ENCODE measurements at regions of chr2 and their contacts with region 1.

Region 1: GRCh38 chr2:57497489-57498096 is 549.0 kb upstream of the VRK2 start:
- DNase-seq: peak; percentile 16 to 64
- ATAC-seq: peak; percentile 85 to 86; a peak in 5 of 6 replicates
- H3K4me3 ChIP-seq: no peak overlapping the region
- H3K27ac ChIP-seq: no peak overlapping the region
- H3K4me1 ChIP-seq: no peaks in the 10 kb centered on the region
- CTCF ChIP-seq: peak; percentile 93
- EP300 ChIP-seq: no peak
- POLR2A ChIP-seq: no peak
- RAD21 ChIP-seq: peak; percentile 85 to 91

Region 2: DNA sequence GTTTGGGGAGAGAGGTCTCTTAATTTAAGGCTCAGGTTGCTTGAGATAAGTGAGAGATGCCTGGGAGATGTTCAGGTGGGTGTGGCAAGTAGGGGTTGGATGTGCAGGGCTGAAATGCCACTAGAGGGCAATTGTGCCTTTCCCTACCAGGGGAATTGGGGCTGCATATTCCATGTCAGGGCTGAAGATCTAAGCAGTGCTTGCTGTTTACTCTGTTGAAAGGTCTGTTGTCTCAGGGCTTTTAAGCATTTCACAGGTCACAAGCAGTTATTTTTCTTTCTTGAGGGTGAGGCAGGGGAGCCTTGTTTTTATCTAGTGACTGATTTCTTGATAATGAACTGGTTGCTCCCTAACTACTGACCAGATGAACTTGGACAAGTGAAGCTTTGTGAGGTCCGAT is 1305.9 kb before region 1 on chr2:
- CTCF ChIA-PET with region 1: interaction called, 88 read pairs
- POLR2A ChIA-PET with region 1: no interaction called
- DNase-seq: peak; percentile 58 to 71
- ATAC-seq: peak; percentile 95 to 98
- H3K4me3 ChIP-seq: no peak overlapping the region
- H3K27ac ChIP-seq: no peak overlapping the region
- H3K4me1 ChIP-seq: no peaks in the 10 kb centered on the region; the same call in 2 of the 3 replicates
- CTCF ChIP-seq: peak; percentile 82
- EP300 ChIP-seq: no peak
- POLR2A ChIP-seq: no peak
- RAD21 ChIP-seq: peak; percentile 88 to 89

Region 3: GRCh38 chr2:57510704-57511103 is 13.1 kb after region 1 on chr2:
- CTCF ChIA-PET with region 1: interaction called, 24 read pairs
- POLR2A ChIA-PET with region 1: no interaction called
- DNase-seq: no peak
- ATAC-seq: peak in 1 of 2 experiments; percentile 55; a peak in 2 of 6 replicates
- H3K4me3 ChIP-seq: no peak overlapping the region
- H3K27ac ChIP-seq: no peak overlapping the region
- H3K4me1 ChIP-seq: no peaks in the 10 kb centered on the region
- CTCF ChIP-seq: no peak
- EP300 ChIP-seq: no peak
- POLR2A ChIP-seq: no peak
- RAD21 ChIP-seq: no peak

Measured in A549 (cell line).